ENCODE measurements at regions of chr17 and their contacts with region 1.

Region 1: GRCh38 chr17:4948931-4949320 is 596 bp upstream of the PFN1 start:
- DNase-seq: peak; percentile 88 to 92 (median 90)
- ATAC-seq: peak; percentile 64 to 82 (median 78)
- H3K4me3 ChIP-seq: peak overlapping the region; percentile 73 to 100 (median 98)
- H3K27ac ChIP-seq: peak overlapping the region; percentile 96 to 100 (median 99)
- H3K4me1 ChIP-seq: peaks cover 11 to 79% (median 44%) of the 10 kb centered on the region in 12 donors
- H3K27me3 ChIP-seq: no peaks in the 10 kb centered on the region
- CTCF ChIP-seq: no peak
- POLR2A ChIP-seq: peak in 1 of 2 donors; percentile 62

Region 2: GRCh38 chr17:4733073-4733531 is 215.8 kb before region 1 on chr17:
- intact Hi-C with region 1: no loop called
- DNase-seq: peak in 2 of 5 donors; percentile 48 to 55
- ATAC-seq: no peak
- H3K4me3 ChIP-seq: no peak overlapping the region
- H3K27ac ChIP-seq: peak overlapping the region in 3 of 12 donors; percentile 24 to 91 (median 62)
- H3K4me1 ChIP-seq: peaks cover 0 to 55% (median 11%) of the 10 kb centered on the region in 12 donors
- H3K27me3 ChIP-seq: peaks cover 0 to 4% (median 0%) of the 10 kb centered on the region in 9 donors
- CTCF ChIP-seq: peak in 2 of 12 donors; percentile 8 to 10
- POLR2A ChIP-seq: no peak

Region 3: DNA sequence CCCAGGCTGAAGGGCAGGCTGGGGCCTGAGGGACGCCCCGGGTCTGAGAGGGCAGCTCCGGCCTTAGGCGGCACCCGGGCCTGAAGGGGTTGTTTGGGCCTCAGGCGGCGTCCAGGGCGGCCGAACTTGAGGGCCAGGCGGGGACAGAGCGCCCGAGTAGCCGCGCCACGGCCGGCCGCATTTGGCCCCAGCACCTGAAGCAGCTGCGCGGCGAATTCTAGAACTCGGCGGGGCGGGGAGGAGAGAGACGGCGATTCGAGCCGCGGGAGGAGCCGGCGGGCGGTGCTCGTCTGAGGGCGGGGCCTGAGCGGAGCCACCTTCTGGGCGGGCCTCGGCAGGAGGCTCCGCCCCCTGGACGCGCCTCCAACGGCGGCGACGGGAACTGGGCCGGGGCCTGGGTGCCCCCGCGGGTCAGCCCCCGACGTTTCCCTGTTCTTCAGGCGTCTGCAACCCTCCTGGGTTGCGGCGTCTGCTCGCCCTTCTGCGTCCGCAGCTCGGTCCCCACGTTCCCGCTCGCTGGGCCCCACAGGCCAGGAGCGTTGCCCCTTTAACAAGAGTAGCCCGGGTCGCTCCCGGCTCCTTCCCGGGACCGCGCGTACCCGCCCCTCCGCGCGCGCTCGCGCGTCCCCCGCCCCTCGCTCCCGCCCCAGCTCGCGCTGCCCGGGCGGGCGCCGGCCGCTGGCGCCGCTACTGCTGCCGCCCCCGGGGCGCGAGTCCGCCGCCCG is 48.5 kb after region 1 on chr17 and contains the starts of genes INCA1 and KIF1C:
- intact Hi-C with region 1: loop called in 2 of 10 experiments (anchors 2 to 5 kb)
- DNase-seq: peak; percentile 95 to 98 (median 96)
- ATAC-seq: peak; percentile 63 to 90 (median 88)
- H3K4me3 ChIP-seq: peak within 1 kb of the TSS; percentile 66 to 100 (median 94)
- H3K27ac ChIP-seq: peak within 1 kb of the TSS; percentile 92 to 99 (median 95)
- H3K4me1 ChIP-seq: peaks cover 0 to 41% (median 31%) of the 10 kb centered on the region in 12 donors
- H3K27me3 ChIP-seq: no peaks in the 10 kb centered on the region
- CTCF ChIP-seq: peak in 6 of 12 donors; percentile 7 to 35 (median 27)
- POLR2A ChIP-seq: peak in 1 of 2 donors; percentile 87
- total RNA-seq, gene INCA1: 0.75 to 4.0 (median 2.7) TPM
- total RNA-seq, gene KIF1C: 335 to 868 (median 539) TPM

Region 4: GRCh38 chr17:5065227-5065744 is 116.4 kb after region 1 on chr17:
- intact Hi-C with region 1: no loop called
- DNase-seq: no peak
- ATAC-seq: no peak
- H3K4me3 ChIP-seq: no peak overlapping the region
- H3K27ac ChIP-seq: no peak overlapping the region
- H3K4me1 ChIP-seq: no peaks in the 10 kb centered on the region
- H3K27me3 ChIP-seq: no peaks in the 10 kb centered on the region
- CTCF ChIP-seq: no peak
- POLR2A ChIP-seq: no peak

Region 5: DNA sequence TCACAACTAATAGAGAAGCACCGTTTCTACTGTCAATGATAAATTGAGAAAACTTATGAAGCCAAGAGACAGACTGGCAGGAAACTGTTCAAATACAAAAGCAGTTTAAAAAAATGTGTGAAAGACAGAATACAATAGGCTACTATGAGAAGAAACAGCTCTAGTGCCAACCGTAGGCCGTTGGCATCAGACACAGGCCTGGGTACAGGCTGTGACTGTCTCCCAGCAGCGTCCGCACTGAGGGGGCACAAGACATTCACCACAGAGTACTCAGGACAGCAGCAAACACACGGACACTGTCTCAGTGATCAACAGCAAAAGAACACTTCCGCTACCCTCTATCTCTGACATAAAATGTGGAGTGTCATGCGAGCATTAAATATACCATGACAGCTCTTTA is 497.9 kb after region 1 on chr17:
- intact Hi-C with region 1: no loop called
- DNase-seq: no peak
- ATAC-seq: no peak
- H3K4me3 ChIP-seq: no peak overlapping the region
- H3K27ac ChIP-seq: no peak overlapping the region
- H3K4me1 ChIP-seq: no peaks in the 10 kb centered on the region
- H3K27me3 ChIP-seq: no peaks in the 10 kb centered on the region
- CTCF ChIP-seq: no peak
- POLR2A ChIP-seq: no peak